ENCODE measurements at regions of chr5 and their contacts with region 1.

Region 1: DNA sequence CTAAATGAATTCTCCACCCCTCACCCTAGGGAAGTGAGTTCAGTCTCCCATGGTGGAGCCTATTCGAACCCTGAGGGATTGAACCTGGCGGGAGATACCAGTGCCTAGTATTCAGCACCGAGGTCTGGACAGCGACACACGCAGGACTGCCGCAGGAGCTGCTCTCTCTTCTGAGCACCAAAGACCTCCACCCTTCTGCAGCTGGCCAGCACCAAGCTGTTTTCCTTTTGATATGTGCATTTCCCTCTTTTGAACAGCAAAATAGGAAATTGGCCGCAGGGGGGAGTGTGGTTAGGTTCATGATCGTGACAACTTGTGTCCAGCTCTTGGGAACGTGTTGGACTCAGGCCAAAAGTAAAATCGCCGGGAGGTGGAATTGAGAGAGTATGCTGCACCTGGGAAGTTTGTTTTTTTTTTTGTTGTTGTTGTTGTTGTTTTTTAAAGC is 1.2 kb upstream of the PCSK1 start:
- DNase-seq: peak; percentile 48
- ATAC-seq: peak; percentile 97
- H3K4me3 ChIP-seq: no peak overlapping the region
- H3K27ac ChIP-seq: no peak overlapping the region
- H3K4me1 ChIP-seq: no peaks in the 10 kb centered on the region
- H3K27me3 ChIP-seq: no peaks in the 10 kb centered on the region
- CTCF ChIP-seq: 0 out of 2 replicates have a peak, but pooled peaks have one; percentile 16
- EP300 ChIP-seq: no peak
- POLR2A ChIP-seq: no peak
- RAD21 ChIP-seq: no peak

Region 2: DNA sequence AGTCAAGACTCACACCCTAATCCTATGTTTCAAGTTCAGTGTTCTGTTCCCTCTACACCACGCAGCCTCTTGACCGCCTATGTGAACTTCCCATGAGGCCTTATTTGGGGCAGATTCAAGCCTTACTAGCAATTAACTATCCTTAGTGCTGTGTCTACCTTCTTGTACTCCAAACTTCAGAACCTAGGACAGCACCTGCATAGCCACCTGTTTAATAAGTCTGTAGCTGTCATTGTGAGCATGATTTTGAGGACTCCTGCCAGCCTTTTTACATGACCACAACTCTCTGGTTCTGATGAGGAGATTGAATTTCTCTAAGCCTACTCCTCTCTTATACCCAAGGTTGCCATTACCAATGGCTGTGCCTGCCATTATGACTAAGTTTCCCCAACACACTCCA is 49.7 kb after region 1 on chr5:
- CTCF ChIA-PET with region 1: no interaction called
- POLR2A ChIA-PET with region 1: no interaction called
- in situ Hi-C with region 1: no loop called
- intact Hi-C with region 1: loop called (anchors 1 kb)
- DNase-seq: peak; percentile 32
- ATAC-seq: peak; percentile 48; the same call in 1 of the 3 replicates
- H3K4me3 ChIP-seq: no peak overlapping the region
- H3K27ac ChIP-seq: no peak overlapping the region
- H3K4me1 ChIP-seq: no peaks in the 10 kb centered on the region
- H3K27me3 ChIP-seq: no peaks in the 10 kb centered on the region; a peak in 1 of 5 replicates
- CTCF ChIP-seq: no peak
- EP300 ChIP-seq: no peak
- POLR2A ChIP-seq: no peak
- RAD21 ChIP-seq: no peak

Region 3: DNA sequence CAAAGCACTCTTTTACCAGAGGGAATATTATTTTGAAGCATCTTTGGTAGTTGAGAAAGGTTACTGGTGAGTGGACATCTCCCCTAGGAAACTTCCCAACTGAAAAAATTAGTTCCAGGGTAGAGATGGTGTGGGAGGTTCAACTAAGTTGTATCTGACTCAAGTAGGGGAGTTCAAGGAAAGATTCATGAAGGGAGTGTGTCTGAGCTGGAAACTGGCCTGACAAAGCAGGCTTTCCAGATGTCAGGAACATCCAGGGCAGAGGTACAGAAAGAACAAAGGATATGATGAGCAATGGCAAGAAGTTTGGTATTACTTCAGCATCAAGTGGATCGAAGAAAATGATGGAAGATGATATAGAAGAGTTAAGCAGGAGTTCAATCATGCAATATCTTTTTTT is 1206.9 kb after region 1 on chr5:
- CTCF ChIA-PET with region 1: no interaction called
- POLR2A ChIA-PET with region 1: no interaction called
- in situ Hi-C with region 1: no loop called
- intact Hi-C with region 1: no loop called
- DNase-seq: no peak
- ATAC-seq: no peak
- H3K4me3 ChIP-seq: no peak overlapping the region
- H3K27ac ChIP-seq: no peak overlapping the region
- H3K4me1 ChIP-seq: no peaks in the 10 kb centered on the region
- H3K27me3 ChIP-seq: no peaks in the 10 kb centered on the region
- CTCF ChIP-seq: no peak
- EP300 ChIP-seq: no peak
- POLR2A ChIP-seq: no peak
- RAD21 ChIP-seq: no peak